Caco-2 (cell line): ENCODE measurements at regions of chr10 and their contacts with region 1.

Region 1: GRCh38 chr10:23067939-23068775 is 27.2 kb upstream of the MSRB2 start:
- DNase-seq: peak; percentile 75 to 80
- H3K4me3 ChIP-seq: no peak overlapping the region
- H3K4me3 Mint-ChIP-seq: no peak overlapping the region
- H3K27ac Mint-ChIP-seq: no peak overlapping the region
- H3K4me1 ChIP-seq: no peaks in the 10 kb centered on the region
- H3K4me1 Mint-ChIP-seq: no peaks in the 10 kb centered on the region
- H3K27me3 ChIP-seq: no peaks in the 10 kb centered on the region
- H3K27me3 Mint-ChIP-seq: no peaks in the 10 kb centered on the region
- CTCF ChIP-seq: peak; percentile 91 to 94

Region 2: DNA sequence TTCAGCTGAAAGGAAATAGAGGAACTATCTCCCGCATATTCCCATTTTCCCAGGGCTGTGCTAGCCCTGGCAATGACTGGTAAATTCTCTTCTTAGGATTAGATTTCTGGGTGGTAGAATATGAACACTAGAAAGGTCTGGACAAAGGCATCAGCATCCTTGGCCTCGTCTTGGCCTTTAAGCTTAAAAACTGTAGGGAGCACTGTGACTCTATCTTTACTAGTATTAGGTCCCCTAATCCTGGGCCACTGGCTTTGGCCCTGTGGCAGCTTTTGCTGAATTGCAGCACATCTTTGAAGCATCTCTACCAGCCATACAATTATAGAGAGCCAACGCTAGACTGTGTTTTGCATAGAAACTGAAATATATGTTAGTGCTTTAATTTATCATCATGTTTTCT is 808.9 kb before region 1 on chr10:
- CTCF ChIA-PET with region 1: no interaction called
- POLR2A ChIA-PET with region 1: no interaction called
- intact Hi-C with region 1: loop called (anchors 1 kb)
- DNase-seq: no peak
- H3K4me3 ChIP-seq: no peak overlapping the region
- H3K4me3 Mint-ChIP-seq: no peak overlapping the region
- H3K27ac Mint-ChIP-seq: no peak overlapping the region
- H3K4me1 ChIP-seq: no peaks in the 10 kb centered on the region
- H3K4me1 Mint-ChIP-seq: no peaks in the 10 kb centered on the region
- H3K27me3 ChIP-seq: no peaks in the 10 kb centered on the region; the same call in 1 of the 2 replicates
- H3K27me3 Mint-ChIP-seq: peaks cover 11% of the 10 kb centered on the region
- CTCF ChIP-seq: no peak

Region 3: GRCh38 chr10:22573820-22574569 is 494.2 kb before region 1 on chr10:
- CTCF ChIA-PET with region 1: no interaction called
- POLR2A ChIA-PET with region 1: no interaction called
- intact Hi-C with region 1: loop called (anchors 5 kb)
- DNase-seq: peak in 1 of 2 experiments; percentile 43
- H3K4me3 ChIP-seq: no peak overlapping the region
- H3K4me3 Mint-ChIP-seq: no peak overlapping the region
- H3K27ac Mint-ChIP-seq: no peak overlapping the region
- H3K4me1 ChIP-seq: no peaks in the 10 kb centered on the region
- H3K4me1 Mint-ChIP-seq: no peaks in the 10 kb centered on the region
- H3K27me3 ChIP-seq: no peaks in the 10 kb centered on the region
- H3K27me3 Mint-ChIP-seq: no peaks in the 10 kb centered on the region
- CTCF ChIP-seq: peak; percentile 56 to 73

Region 4: DNA sequence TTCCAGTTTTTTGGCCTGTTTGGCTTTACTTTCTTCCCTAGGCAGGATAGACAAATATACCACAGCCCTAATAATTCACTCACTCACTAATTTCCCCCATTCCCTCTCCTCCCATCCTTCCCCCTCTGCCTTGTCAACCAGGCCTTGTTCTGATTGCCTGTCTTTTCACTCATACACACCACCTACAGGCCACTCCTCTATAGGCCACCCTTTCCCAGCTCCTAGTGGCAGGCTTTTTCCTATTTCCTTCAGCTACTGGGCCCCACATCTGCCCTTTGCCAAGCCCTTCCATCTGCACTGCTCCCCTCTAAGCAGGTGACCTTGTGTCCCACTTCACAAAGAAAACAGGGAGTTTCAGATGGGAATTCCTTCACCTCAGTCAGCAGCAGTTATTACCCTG is 32.6 kb before region 1 on chr10:
- CTCF ChIA-PET with region 1: no interaction called
- POLR2A ChIA-PET with region 1: no interaction called
- intact Hi-C with region 1: no loop called
- DNase-seq: peak in 1 of 2 experiments; percentile 52
- H3K4me3 ChIP-seq: no peak overlapping the region
- H3K4me3 Mint-ChIP-seq: no peak overlapping the region
- H3K27ac Mint-ChIP-seq: no peak overlapping the region
- H3K4me1 ChIP-seq: no peaks in the 10 kb centered on the region
- H3K4me1 Mint-ChIP-seq: no peaks in the 10 kb centered on the region
- H3K27me3 ChIP-seq: no peaks in the 10 kb centered on the region; the same call in 1 of the 2 replicates
- H3K27me3 Mint-ChIP-seq: peaks cover 8% of the 10 kb centered on the region
- CTCF ChIP-seq: peak; percentile 54 to 84

Region 5: GRCh38 chr10:23095404-23095965 is 27.3 kb after region 1 on chr10 and contains the start of gene MSRB2:
- CTCF ChIA-PET with region 1: no interaction called
- POLR2A ChIA-PET with region 1: no interaction called
- intact Hi-C with region 1: no loop called
- DNase-seq: peak; percentile 90 to 98
- H3K4me3 ChIP-seq: peak within 1 kb of the TSS; percentile 78
- H3K4me3 Mint-ChIP-seq: peak within 1 kb of the TSS; percentile 94
- H3K27ac Mint-ChIP-seq: peak within 1 kb of the TSS; percentile 83
- H3K4me1 ChIP-seq: peaks cover 31% of the 10 kb centered on the region
- H3K4me1 Mint-ChIP-seq: peaks cover 23% of the 10 kb centered on the region
- H3K27me3 ChIP-seq: no peaks in the 10 kb centered on the region
- H3K27me3 Mint-ChIP-seq: no peaks in the 10 kb centered on the region
- CTCF ChIP-seq: peak in 1 of 2 experiments; percentile 8
- total RNA-seq, gene MSRB2: 11.9 and 13.7 TPM in 2 replicates